PC-9 (cell line): ENCODE measurements at regions of chr5 and their contacts with region 1.

Region 1: DNA sequence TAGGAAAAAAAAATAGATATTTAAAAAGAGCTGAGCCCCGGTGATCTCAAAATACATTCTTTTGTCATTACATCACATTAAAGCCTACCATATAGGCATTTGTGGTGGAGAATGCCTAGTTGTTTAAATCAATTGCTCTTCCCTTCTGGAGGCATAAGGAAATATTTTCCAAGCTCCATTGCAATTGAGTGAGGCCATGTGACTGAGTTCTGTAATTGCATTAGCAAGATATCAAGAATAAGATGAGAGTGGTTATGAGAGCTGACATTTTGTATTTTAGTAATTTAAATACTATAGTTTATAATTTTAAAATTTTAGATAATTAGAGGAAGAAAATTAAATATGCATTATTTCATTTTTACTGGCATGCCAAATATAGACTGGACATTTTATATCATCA is 1195.9 kb downstream of the DTWD2 start:
- DNase-seq: no peak
- H3K4me3 ChIP-seq: no peak overlapping the region
- H3K27ac ChIP-seq: no peak overlapping the region
- H3K4me1 ChIP-seq: no peaks in the 10 kb centered on the region
- H3K27me3 ChIP-seq: no peaks in the 10 kb centered on the region
- CTCF ChIP-seq: no peak

Region 2: GRCh38 chr5:117701062-117701461 is 91.4 kb before region 1 on chr5:
- CTCF ChIA-PET with region 1: no interaction called
- POLR2A ChIA-PET with region 1: no interaction called
- intact Hi-C with region 1: no loop called
- DNase-seq: peak in 1 of 2 experiments; percentile 30
- H3K4me3 ChIP-seq: no peak overlapping the region
- H3K27ac ChIP-seq: no peak overlapping the region
- H3K4me1 ChIP-seq: no peaks in the 10 kb centered on the region
- H3K27me3 ChIP-seq: no peaks in the 10 kb centered on the region
- CTCF ChIP-seq: no peak

Region 3: GRCh38 chr5:117888688-117889087 is 96.2 kb after region 1 on chr5:
- CTCF ChIA-PET with region 1: no interaction called
- POLR2A ChIA-PET with region 1: interaction called, 18 read pairs
- intact Hi-C with region 1: no loop called
- DNase-seq: no peak
- H3K4me3 ChIP-seq: no peak overlapping the region
- H3K27ac ChIP-seq: no peak overlapping the region
- H3K4me1 ChIP-seq: no peaks in the 10 kb centered on the region
- H3K27me3 ChIP-seq: no peaks in the 10 kb centered on the region
- CTCF ChIP-seq: no peak